BJ (cell line): ENCODE measurements at regions of chr14 and their contacts with region 1.

Region 1: GRCh38 chr14:51304941-51305340 is 64.9 kb downstream of the TMX1 start:
- DNase-seq: peak; percentile 95
- H3K4me3 ChIP-seq: no peak overlapping the region
- H3K27me3 ChIP-seq: no peaks in the 10 kb centered on the region
- CTCF ChIP-seq: no peak

Region 2: GRCh38 chr14:51251458-51251857 is 53.5 kb before region 1 on chr14:
- CTCF ChIA-PET with region 1: no interaction called
- POLR2A ChIA-PET with region 1: no interaction called
- DNase-seq: no peak
- H3K4me3 ChIP-seq: no peak overlapping the region
- H3K27me3 ChIP-seq: no peaks in the 10 kb centered on the region
- CTCF ChIP-seq: no peak

Region 3: DNA sequence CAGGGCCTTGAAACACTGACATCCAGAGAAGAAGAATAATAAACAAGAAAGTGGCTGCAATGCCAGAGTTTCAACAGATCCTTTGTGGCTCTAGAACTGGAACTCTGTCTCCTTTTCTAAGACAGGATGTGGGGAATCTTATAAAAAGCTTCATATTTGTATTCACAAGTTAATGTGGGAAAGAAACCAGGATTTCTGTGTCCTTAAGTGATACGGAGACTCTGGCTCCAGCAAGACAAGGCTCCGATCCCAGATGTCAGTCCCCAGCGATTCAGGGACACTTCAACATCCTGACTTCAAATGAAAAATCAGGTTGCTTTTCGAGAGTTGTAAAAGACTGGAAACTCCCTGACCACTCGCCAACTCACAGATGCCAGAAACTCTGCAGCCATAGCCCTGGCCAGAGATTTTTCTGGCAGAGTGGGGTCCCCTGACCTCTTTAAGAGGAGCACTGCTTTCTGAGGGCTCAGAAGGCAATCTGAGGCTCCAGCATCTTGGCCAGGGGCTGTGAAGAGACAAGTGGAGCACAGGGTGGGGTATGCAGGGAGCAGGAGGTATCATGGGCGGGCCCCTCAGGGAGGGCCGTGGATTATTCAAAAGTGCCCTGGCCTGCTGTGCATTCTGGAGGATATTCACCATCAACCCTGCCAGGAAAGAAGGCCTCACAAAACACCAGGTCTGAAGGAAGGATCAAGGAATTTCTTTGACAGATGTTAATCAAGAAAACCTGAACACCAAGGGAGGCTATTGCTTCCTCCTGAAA is 11.6 kb before region 1 on chr14:
- CTCF ChIA-PET with region 1: interaction called, 6 read pairs
- POLR2A ChIA-PET with region 1: interaction called, 37 read pairs
- DNase-seq: peak; percentile 53
- H3K4me3 ChIP-seq: no peak overlapping the region
- H3K27me3 ChIP-seq: no peaks in the 10 kb centered on the region
- CTCF ChIP-seq: no peak

Region 4: GRCh38 chr14:51357250-51357649 is 52.3 kb after region 1 on chr14:
- CTCF ChIA-PET with region 1: no interaction called
- POLR2A ChIA-PET with region 1: no interaction called
- DNase-seq: no peak
- H3K4me3 ChIP-seq: no peak overlapping the region
- H3K27me3 ChIP-seq: no peaks in the 10 kb centered on the region
- CTCF ChIP-seq: no peak